Heart left ventricle (tissue), 16 donors: ENCODE measurements at regions of chr16 and their contacts with region 1.

Region 1: DNA sequence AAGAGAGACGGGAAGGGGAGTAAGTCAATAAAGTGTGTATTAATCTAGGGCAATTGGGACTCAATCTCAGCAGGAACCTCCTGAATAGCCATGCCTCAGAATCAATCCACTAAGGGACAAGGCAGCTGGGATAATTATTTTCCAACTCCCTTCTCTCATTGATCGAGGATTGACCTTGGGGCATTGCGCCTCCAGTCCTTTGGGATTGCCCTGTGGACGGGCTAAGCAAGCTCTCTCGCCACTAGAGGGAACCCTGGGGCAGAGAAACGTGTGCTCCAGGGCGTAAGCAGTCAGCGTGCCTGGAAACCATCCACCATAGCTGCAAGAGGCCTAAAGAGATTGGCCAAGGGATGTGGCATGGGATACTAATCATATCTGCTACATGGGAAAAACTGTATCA is 53.9 kb upstream of the ERCC4 start:
- DNase-seq: peak; percentile 69 to 83 (median 73)
- ATAC-seq: peak; percentile 64 to 95 (median 94)
- H3K4me3 ChIP-seq: no peak overlapping the region
- H3K27ac ChIP-seq: no peak overlapping the region
- H3K4me1 ChIP-seq: no peaks in the 10 kb centered on the region
- H3K27me3 ChIP-seq: peaks cover 0 to 8% (median 0%) of the 10 kb centered on the region in 9 donors
- CTCF ChIP-seq: peak; percentile 37 to 77 (median 65)
- POLR2A ChIP-seq: no peak

Region 2: GRCh38 chr16:13733546-13733945 is 132.5 kb before region 1 on chr16:
- intact Hi-C with region 1: loop called in 1 of 10 experiments (anchors 5 kb)
- DNase-seq: no peak
- ATAC-seq: no peak
- H3K4me3 ChIP-seq: no peak overlapping the region
- H3K27ac ChIP-seq: no peak overlapping the region
- H3K4me1 ChIP-seq: peaks cover 0 to 4% (median 0%) of the 10 kb centered on the region in 12 donors
- H3K27me3 ChIP-seq: peaks cover 0 to 6% (median 0%) of the 10 kb centered on the region in 9 donors
- CTCF ChIP-seq: no peak
- POLR2A ChIP-seq: no peak

Region 3: GRCh38 chr16:13742928-13743327 is 123.1 kb before region 1 on chr16:
- intact Hi-C with region 1: loop called in 5 of 10 experiments (anchors 5 to 10 kb)
- DNase-seq: no peak
- ATAC-seq: no peak
- H3K4me3 ChIP-seq: no peak overlapping the region
- H3K27ac ChIP-seq: no peak overlapping the region
- H3K4me1 ChIP-seq: no peaks in the 10 kb centered on the region
- H3K27me3 ChIP-seq: no peaks in the 10 kb centered on the region
- CTCF ChIP-seq: no peak
- POLR2A ChIP-seq: no peak

Region 4: GRCh38 chr16:13811834-13812233 is 54.2 kb before region 1 on chr16:
- intact Hi-C with region 1: no loop called
- DNase-seq: no peak
- ATAC-seq: no peak
- H3K4me3 ChIP-seq: no peak overlapping the region
- H3K27ac ChIP-seq: no peak overlapping the region
- H3K4me1 ChIP-seq: no peaks in the 10 kb centered on the region
- H3K27me3 ChIP-seq: peaks cover 0 to 16% (median 0%) of the 10 kb centered on the region in 9 donors
- CTCF ChIP-seq: no peak
- POLR2A ChIP-seq: no peak

Region 5: DNA sequence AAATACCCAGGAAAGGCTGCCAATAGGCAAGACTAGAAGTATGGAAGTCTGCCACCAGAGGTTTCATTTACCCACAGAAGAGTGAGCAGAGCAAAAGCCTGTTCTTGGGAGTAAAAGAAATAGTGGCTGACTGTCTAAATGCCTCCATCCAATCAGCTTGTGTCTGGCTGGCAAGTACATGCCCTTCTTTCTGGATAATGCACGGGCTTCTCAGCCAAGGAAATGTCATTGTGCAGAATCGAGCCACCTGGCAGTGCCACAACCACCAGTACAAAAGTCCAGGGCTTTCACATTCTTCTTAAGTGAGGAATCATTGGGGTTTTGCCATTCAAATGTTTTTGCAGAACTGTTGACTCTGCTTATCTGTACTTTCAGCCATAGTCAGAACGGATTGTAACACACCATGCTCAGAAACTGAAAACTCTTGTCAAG is 43.8 kb after region 1 on chr16:
- intact Hi-C with region 1: loop called in 3 of 10 experiments (anchors 5 kb)
- DNase-seq: peak in 4 of 5 donors; percentile 64 to 78 (median 70)
- ATAC-seq: peak; percentile 93 to 97 (median 96)
- H3K4me3 ChIP-seq: peak overlapping the region in 1 of 12 donors; percentile 4
- H3K27ac ChIP-seq: peak overlapping the region; percentile 49 to 89 (median 70)
- H3K4me1 ChIP-seq: peaks cover 0 to 15% (median 0%) of the 10 kb centered on the region in 12 donors
- H3K27me3 ChIP-seq: no peaks in the 10 kb centered on the region
- CTCF ChIP-seq: no peak
- POLR2A ChIP-seq: no peak